Aorta (tissue), 5 donors: ENCODE measurements at regions of chr5 and their contacts with region 1.

Region 1: DNA sequence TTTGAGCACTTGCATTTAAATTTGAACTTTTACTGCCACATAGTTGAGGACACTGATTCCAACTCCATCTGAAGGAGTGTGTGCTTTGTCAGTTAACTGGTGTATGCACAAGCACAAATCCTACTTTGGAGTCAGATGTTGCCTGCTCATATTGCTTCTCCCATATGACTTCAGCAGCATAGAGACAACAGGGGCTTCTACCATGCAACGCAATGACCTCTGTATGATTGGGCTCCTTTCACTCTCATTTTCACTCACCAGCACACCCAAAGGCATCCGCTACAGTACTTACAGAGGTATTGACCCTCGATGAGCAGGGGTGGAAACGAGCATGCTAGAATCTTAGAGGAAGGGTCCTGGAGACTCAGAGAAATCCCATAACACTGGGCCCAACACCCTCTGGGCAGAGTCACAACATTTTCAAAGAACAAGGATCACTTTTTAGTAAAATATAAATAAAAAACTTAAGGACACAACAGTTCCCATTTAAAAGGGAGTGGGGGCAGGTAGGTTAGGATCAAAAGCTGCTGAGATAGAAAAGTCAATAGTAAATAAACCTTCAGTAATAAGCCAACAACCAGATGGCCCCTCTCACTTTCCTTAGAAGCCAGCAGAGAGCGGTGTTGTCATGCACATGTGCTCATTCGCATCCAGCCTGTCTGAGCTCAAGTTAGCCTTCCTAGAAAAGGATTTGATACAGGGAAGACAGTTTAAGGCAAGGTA is 203.8 kb downstream of the SNCAIP start:
- DNase-seq: peak in 1 of 2 donors; percentile 62
- ATAC-seq: peak; percentile 82
- H3K4me3 ChIP-seq: no peak overlapping the region
- H3K27ac ChIP-seq: no peak overlapping the region
- H3K4me1 ChIP-seq: no peaks in the 10 kb centered on the region
- H3K27me3 ChIP-seq: no peaks in the 10 kb centered on the region

Region 2: GRCh38 chr5:122126177-122126755 is 389.6 kb before region 1 on chr5:
- intact Hi-C with region 1: no loop called
- DNase-seq: no peak
- ATAC-seq: no peak
- H3K4me3 ChIP-seq: peak overlapping the region in 1 of 2 donors; percentile 59
- H3K27ac ChIP-seq: no peak overlapping the region
- H3K4me1 ChIP-seq: peaks cover 2 to 8% of the 10 kb centered on the region in 2 donors
- H3K27me3 ChIP-seq: no peaks in the 10 kb centered on the region

Region 3: GRCh38 chr5:123083298-123083697 is 567.4 kb after region 1 on chr5:
- intact Hi-C with region 1: loop called in 1 of 2 experiments (anchors 5 kb)
- DNase-seq: no peak
- ATAC-seq: no peak
- H3K4me3 ChIP-seq: no peak overlapping the region
- H3K27ac ChIP-seq: peak overlapping the region in 1 of 2 donors; percentile 30
- H3K4me1 ChIP-seq: peaks cover 0 to 4% of the 10 kb centered on the region in 2 donors
- H3K27me3 ChIP-seq: no peaks in the 10 kb centered on the region